ENCODE measurements at regions of chr12 and their contacts with region 1.

Region 1: DNA sequence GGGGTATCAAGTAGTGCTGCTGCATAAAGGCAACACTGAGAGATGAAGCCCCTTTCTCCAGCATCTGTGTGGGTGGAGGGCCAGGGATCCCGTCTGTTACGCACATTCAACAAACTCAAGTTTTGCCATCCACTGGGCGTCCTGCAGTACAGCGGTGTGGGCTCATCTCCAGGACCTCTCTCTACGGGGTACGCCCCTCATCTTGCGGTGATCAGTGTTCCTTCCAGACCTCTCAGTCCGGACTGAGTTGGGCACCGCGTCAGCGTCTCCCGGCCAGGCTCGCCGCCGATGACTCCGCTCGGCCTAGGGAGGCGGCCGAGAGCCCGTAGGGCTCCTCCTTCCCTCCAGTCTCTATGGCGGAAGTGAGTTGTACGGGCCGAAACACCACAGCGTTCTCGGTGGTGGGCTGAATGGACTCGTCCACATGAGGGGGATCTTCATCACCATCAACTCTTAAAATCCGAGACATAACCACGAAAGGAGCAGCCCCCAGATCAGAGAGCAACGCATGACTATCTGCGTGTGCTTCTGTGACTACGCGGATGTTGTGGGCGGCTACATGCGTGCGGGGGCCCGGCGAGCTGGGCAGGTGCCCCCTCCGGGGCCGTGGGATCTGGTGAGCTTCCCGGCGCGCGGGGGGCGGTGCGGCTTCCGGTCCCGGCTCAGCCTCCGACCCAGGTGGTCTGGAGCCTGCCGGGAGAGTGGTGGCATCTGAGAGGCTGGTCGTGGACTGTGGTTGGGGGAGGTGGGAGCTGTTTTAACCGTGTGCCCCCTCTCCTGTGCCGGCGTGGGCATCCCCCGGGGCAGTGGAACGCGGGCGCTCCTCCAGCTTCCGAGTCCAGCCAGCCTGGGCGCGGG is at the start of gene ATG101:
- DNase-seq: peak; percentile 93 to 98 (median 95)
- H3K4me3 ChIP-seq: peak within 1 kb of the TSS; percentile 87 to 90 (median 88)
- H3K27ac ChIP-seq: peak within 1 kb of the TSS; percentile 82 to 95
- H3K4me1 ChIP-seq: peaks cover 3 to 22% (median 19%) of the 10 kb centered on the region in 3 donors
- H3K27me3 ChIP-seq: no peaks in the 10 kb centered on the region
- CTCF ChIP-seq: peak; percentile 88
- total RNA-seq, gene ATG101: 32.1 TPM

Region 2: DNA sequence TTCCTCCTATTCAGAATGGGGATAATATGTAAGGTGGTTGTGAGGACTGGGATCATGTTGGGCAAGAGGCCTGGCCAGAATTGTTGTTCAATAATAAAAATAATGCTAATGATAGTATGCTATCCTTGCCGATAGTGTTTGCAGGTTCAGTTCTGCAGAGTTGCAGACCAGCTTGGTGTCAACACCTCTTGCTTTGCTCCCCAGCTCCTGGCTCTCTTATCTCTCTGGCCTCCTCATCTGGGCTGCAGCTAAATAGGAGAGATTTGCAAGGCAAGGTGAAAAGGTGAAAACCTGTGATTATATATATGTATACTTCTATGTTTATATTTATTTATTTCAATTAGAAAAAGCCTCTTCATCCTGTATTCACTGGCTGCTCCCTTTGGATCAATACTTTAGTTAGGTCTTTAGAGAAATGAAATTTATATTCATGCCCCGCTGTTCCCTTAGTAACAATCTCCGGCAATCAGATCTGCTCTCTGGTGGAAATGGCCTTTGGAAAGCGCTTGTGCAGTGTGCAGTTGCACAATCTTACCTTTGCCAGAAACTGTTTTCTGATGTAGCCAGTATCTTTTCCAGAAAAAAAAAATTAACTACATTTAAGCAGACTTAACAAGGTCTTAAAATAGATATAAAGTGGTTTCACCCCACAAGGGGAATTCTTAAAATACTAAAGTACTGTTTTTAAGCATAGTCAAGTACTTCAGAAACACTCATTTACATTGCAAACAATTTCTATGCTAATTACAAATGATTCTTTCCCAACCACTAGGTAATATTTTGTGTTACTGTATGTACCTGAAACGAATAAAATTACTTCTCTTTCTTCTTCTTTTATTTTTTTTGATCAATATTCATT is 137.1 kb before region 1 on chr12:
- intact Hi-C with region 1: no loop called
- DNase-seq: peak in 1 of 5 donors; percentile 36
- H3K4me3 ChIP-seq: no peak overlapping the region
- H3K27ac ChIP-seq: no peak overlapping the region
- H3K4me1 ChIP-seq: no peaks in the 10 kb centered on the region
- H3K27me3 ChIP-seq: no peaks in the 10 kb centered on the region
- CTCF ChIP-seq: no peak

Region 3: GRCh38 chr12:52023182-52023975 is 46.2 kb before region 1 on chr12:
- intact Hi-C with region 1: loop called (anchors 10 kb)
- DNase-seq: peak; percentile 82 to 96 (median 89)
- H3K4me3 ChIP-seq: peak overlapping the region in 2 of 3 donors; percentile 13 to 58
- H3K27ac ChIP-seq: peak overlapping the region in 1 of 2 donors; percentile 49
- H3K4me1 ChIP-seq: peaks cover 0 to 9% (median 6%) of the 10 kb centered on the region in 3 donors
- H3K27me3 ChIP-seq: no peaks in the 10 kb centered on the region
- CTCF ChIP-seq: peak; percentile 91

Measured in kidney (tissue), 22 donors.